Caco-2 (cell line): ENCODE measurements at regions of chr3 and their contacts with region 1.

Region 1: GRCh38 chr3:96705895-96706294 is 108.5 kb upstream of the EPHA6 start:
- DNase-seq: no peak
- H3K4me3 ChIP-seq: no peak overlapping the region
- H3K4me3 Mint-ChIP-seq: no peak overlapping the region
- H3K27ac Mint-ChIP-seq: peak overlapping the region; percentile 79
- H3K4me1 ChIP-seq: peaks cover 25% of the 10 kb centered on the region
- H3K4me1 Mint-ChIP-seq: peaks cover 11% of the 10 kb centered on the region
- H3K27me3 ChIP-seq: no peaks in the 10 kb centered on the region
- H3K27me3 Mint-ChIP-seq: no peaks in the 10 kb centered on the region
- CTCF ChIP-seq: no peak

Region 2: DNA sequence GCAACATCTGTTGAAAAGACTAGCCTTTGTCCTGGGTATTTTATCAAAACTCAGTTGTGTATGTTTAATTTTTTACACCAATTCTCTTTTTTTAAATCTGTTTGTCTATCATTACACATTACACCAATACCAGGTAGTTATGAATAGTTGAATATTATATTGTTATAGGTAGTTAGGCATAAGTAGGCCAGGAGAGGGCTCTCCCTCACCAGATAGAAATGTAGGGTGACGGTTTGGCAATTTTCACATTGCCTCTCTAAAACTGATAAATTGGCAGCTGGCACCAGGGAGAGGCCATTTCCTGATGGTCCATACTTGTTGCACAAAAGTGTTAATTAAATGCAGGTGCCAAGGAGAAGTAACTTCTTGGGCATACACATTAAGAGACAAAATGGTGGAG is 374.6 kb before region 1 on chr3:
- CTCF ChIA-PET with region 1: no interaction called
- POLR2A ChIA-PET with region 1: no interaction called
- intact Hi-C with region 1: loop called (anchors 2 kb)
- DNase-seq: peak in 1 of 2 experiments; percentile 7
- H3K4me3 ChIP-seq: no peak overlapping the region
- H3K4me3 Mint-ChIP-seq: no peak overlapping the region
- H3K27ac Mint-ChIP-seq: no peak overlapping the region
- H3K4me1 ChIP-seq: no peaks in the 10 kb centered on the region
- H3K4me1 Mint-ChIP-seq: no peaks in the 10 kb centered on the region
- H3K27me3 ChIP-seq: no peaks in the 10 kb centered on the region
- H3K27me3 Mint-ChIP-seq: no peaks in the 10 kb centered on the region
- CTCF ChIP-seq: peak; percentile 38 to 42

Region 3: GRCh38 chr3:96631050-96631449 is 74.8 kb before region 1 on chr3:
- CTCF ChIA-PET with region 1: no interaction called
- POLR2A ChIA-PET with region 1: no interaction called
- intact Hi-C with region 1: no loop called
- DNase-seq: no peak
- H3K4me3 ChIP-seq: no peak overlapping the region
- H3K4me3 Mint-ChIP-seq: no peak overlapping the region
- H3K27ac Mint-ChIP-seq: no peak overlapping the region
- H3K4me1 ChIP-seq: no peaks in the 10 kb centered on the region
- H3K4me1 Mint-ChIP-seq: no peaks in the 10 kb centered on the region
- H3K27me3 ChIP-seq: no peaks in the 10 kb centered on the region
- H3K27me3 Mint-ChIP-seq: no peaks in the 10 kb centered on the region
- CTCF ChIP-seq: no peak

Region 4: DNA sequence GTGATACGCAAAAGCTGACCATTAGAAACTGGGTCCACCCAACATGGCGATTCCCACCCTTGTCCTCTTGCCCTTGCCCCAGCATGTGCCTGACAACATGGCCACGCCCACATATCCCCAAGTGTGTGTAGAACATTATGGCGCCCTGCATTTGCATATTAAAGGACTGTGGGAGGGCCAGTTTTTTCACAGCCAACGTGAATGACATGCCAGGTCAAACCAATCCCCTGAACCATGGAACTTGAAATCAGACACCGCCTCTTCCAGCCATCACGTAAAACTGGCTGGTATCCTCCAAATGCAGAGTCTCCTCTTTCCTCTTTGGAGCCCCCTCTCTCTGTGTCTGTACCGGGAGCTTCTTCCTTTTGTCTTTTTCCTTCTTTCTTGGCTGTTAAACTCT is 48.2 kb before region 1 on chr3:
- CTCF ChIA-PET with region 1: no interaction called
- POLR2A ChIA-PET with region 1: no interaction called
- intact Hi-C with region 1: no loop called
- DNase-seq: no peak
- H3K4me3 ChIP-seq: no peak overlapping the region
- H3K4me3 Mint-ChIP-seq: no peak overlapping the region
- H3K27ac Mint-ChIP-seq: no peak overlapping the region
- H3K4me1 ChIP-seq: no peaks in the 10 kb centered on the region
- H3K4me1 Mint-ChIP-seq: no peaks in the 10 kb centered on the region
- H3K27me3 ChIP-seq: no peaks in the 10 kb centered on the region
- H3K27me3 Mint-ChIP-seq: no peaks in the 10 kb centered on the region
- CTCF ChIP-seq: no peak

Region 5: DNA sequence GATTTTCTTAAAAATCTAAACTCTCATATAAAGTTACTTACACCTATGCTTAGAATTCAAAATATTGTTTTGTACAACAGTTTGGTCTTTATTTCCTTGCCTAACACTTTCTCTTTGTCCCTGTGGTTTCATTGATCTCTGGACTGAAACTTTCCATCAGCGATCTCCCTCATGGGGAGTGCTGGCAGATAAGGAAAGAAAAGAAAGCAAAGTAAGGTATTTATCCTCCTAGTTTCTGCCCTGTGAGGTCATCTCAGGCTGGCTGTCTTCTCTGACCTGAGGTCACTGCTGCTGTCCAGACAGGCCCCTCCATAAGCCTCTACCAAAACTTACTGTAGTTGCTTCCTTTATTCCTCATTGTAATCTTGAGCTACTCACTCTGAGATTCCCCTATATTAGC is 50.6 kb after region 1 on chr3:
- CTCF ChIA-PET with region 1: no interaction called
- POLR2A ChIA-PET with region 1: no interaction called
- intact Hi-C with region 1: loop called (anchors 2 kb)
- DNase-seq: peak; percentile 69 to 70
- H3K4me3 ChIP-seq: no peak overlapping the region
- H3K4me3 Mint-ChIP-seq: peak overlapping the region; percentile 57
- H3K27ac Mint-ChIP-seq: peak overlapping the region; percentile 95
- H3K4me1 ChIP-seq: peaks cover 38% of the 10 kb centered on the region
- H3K4me1 Mint-ChIP-seq: peaks cover 24% of the 10 kb centered on the region
- H3K27me3 ChIP-seq: no peaks in the 10 kb centered on the region
- H3K27me3 Mint-ChIP-seq: no peaks in the 10 kb centered on the region
- CTCF ChIP-seq: no peak